ENCODE measurements at regions of chr2 and their contacts with region 1.

Region 1: DNA sequence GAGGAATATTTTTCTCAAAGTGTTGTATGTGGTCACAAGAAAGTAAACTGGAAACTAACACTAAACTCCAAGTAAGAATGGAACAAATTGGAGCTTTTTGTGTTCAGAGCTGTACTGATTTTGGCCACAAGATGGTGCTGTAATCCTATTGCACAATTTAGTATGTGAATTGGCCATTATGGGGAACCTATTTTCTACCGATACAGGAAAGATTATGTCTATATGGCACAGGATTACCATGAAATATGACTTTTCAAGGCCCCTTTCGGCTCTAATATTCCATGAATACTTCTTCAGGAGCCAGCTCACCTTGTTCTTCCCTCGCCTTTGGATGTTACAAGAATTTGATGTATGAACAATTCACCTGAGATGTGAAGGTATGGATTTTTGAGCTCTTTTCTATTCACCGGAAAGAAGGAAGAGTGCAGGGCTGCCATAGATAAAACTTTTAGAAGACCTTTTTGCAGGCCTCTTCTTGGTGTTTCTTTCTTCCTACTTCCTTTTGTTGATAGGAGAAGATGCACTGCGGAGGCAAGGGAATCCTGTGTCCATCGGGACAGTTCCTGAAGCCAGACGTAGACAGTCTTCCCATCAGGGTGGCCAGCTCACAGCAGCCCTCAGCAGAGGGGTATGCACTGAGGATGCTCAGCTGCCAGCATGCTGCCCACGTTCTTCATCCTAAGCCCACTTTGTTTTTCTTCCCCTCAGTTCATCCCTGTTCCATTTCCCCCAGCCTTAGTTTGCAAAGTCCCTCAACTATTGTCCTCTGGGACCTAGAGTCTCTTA is 13.3 kb downstream of the MRPL44 start:
- H3K4me3 ChIP-seq: no peak overlapping the region
- H3K27ac ChIP-seq: no peak overlapping the region
- H3K4me1 ChIP-seq: no peaks in the 10 kb centered on the region
- CTCF ChIP-seq: peak; percentile 63

Region 2: GRCh38 chr2:223945755-223946154 is 24.8 kb before region 1 on chr2:
- CTCF ChIA-PET with region 1: no interaction called
- POLR2A ChIA-PET with region 1: no interaction called
- H3K4me3 ChIP-seq: no peak overlapping the region
- H3K27ac ChIP-seq: no peak overlapping the region
- H3K4me1 ChIP-seq: no peaks in the 10 kb centered on the region
- CTCF ChIP-seq: no peak

Region 3: DNA sequence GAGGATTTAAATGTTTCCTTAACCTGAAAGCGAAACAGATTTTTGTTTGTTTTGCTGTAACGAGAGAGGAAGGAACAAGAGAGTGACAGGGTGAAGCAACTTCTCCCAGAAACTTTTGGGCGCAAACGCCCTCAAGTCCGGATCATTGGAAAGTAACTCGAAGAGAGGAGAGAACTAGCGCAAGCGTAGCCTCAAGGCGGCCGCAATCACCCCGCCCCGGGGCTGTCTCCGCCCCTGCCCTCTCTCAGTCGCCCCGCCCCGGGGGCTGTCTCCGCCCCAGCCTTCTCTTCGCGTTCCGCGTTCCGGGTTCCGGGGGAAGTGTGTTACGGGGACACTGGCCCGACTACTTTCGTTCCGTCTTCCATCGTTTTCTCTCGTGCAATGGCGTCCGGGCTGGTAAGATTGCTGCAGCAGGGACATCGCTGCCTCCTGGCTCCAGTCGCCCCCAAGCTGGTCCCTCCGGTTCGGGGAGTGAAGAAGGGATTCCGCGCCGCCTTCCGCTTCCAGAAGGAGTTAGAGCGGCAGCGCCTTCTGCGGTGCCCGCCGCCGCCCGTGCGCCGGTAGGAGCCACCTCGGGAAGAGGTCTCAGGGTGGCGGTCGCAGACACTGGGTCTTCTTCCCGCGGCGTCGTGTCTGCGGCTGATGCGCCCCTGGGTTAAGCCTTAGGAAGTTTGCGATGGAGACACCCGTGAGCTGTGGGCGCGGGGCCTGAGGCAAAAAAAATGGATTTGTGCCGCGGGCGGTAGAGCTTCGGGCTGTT is 13.3 kb before region 1 on chr2 and contains the start of gene MRPL44:
- CTCF ChIA-PET with region 1: interaction called, 19 read pairs
- POLR2A ChIA-PET with region 1: no interaction called
- H3K4me3 ChIP-seq: peak within 1 kb of the TSS; percentile 61
- H3K27ac ChIP-seq: peak within 1 kb of the TSS; percentile 50; the same call in 1 of the 2 replicates
- H3K4me1 ChIP-seq: peaks cover 16% of the 10 kb centered on the region
- CTCF ChIP-seq: peak; percentile 78

Region 4: DNA sequence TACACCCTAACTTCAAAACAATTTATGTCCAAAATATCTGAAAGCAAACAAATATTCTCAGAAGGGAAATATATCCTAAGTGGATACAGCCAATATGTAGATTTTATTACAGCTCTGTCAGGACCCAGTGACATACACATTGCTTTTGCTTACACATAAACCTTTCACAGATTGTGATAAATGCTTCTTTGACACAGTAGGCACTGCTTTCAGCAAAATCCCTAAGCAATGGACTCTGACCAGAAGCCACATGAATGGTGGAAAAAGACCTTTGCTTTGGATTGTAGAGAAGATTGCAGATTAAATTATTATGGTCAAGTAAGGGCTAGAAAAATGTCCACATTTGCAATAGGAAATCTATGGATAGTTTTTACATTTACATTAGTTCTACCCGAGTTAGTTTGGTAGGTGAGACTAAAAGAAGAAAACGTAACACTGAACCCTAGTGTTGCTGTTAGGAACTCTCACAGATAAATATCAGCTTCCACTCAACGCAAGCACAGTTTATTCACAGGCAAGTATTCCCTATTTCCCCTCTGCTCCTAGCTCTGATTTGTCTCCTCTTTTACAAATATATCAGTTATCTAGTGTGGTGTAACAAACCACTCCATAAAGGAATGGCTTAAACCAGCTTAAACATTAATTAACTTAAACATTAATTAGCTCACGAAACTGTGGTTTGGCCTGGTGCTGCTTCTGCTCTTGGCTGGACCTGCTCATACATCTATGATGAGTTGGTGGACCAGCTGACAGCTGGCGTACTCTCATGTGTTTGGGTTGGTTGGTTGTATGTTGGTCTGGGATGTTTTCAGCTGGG is 92.2 kb after region 1 on chr2:
- CTCF ChIA-PET with region 1: interaction called, 10 read pairs
- POLR2A ChIA-PET with region 1: no interaction called
- H3K4me3 ChIP-seq: no peak overlapping the region
- H3K27ac ChIP-seq: no peak overlapping the region
- H3K4me1 ChIP-seq: no peaks in the 10 kb centered on the region
- CTCF ChIP-seq: no peak

Region 5: DNA sequence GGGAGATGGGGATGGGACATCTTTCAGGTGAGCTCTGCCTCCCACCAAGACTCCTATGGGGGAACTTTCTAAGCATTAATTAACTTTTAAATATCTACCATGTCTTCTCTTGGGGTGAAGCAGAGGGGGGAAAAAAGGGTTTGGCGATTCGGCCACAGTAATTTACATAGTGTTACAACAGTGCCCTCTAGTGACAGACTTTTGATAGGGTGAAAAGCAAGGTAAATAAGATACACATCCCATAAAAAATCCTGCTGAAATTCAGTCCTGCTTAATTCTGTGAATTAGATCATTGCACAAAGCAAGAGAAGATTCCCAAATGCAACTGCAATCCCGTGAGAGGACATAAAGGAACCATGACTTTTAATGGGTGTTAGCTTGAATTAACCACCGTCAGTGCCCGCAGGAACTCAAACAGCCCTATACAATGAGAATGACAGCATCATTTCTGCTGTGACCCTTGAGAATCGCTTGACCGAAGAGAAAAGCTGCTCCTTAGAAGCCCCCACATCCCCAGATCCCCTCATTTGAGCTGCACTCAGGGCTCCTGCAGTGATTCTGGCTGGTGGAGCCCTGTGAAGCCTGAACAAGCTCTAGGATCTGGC is 398.6 kb after region 1 on chr2:
- CTCF ChIA-PET with region 1: interaction called, 10 read pairs
- POLR2A ChIA-PET with region 1: no interaction called
- H3K4me3 ChIP-seq: no peak overlapping the region
- H3K27ac ChIP-seq: no peak overlapping the region
- H3K4me1 ChIP-seq: no peaks in the 10 kb centered on the region
- CTCF ChIP-seq: peak; percentile 33

Region 6: GRCh38 chr2:224650815-224651439 is 680.4 kb after region 1 on chr2:
- CTCF ChIA-PET with region 1: interaction called, 13 read pairs
- POLR2A ChIA-PET with region 1: no interaction called
- H3K4me3 ChIP-seq: no peak overlapping the region
- H3K27ac ChIP-seq: no peak overlapping the region
- H3K4me1 ChIP-seq: no peaks in the 10 kb centered on the region
- CTCF ChIP-seq: peak; percentile 57; the same call in 1 of the 2 replicates

Measured in HEK293 (cell line).